ENCODE measurements at regions of chr3 and their contacts with region 1.

Region 1: GRCh38 chr3:186783073-186783730 is at the start of gene EIF4A2:
- DNase-seq: peak; percentile 88
- ATAC-seq: peak; percentile 73
- H3K4me3 Mint-ChIP-seq: peak within 1 kb of the TSS; percentile 100
- H3K27ac Mint-ChIP-seq: peak within 1 kb of the TSS; percentile 100
- H3K4me1 Mint-ChIP-seq: peaks cover 40% of the 10 kb centered on the region
- H3K27me3 Mint-ChIP-seq: peaks cover 9% of the 10 kb centered on the region; the same call in 1 of the 2 replicates
- CTCF ChIP-seq: no peak
- total RNA-seq, gene EIF4A2: 571 to 574 TPM (median 572 TPM) in 3 replicates

Region 2: DNA sequence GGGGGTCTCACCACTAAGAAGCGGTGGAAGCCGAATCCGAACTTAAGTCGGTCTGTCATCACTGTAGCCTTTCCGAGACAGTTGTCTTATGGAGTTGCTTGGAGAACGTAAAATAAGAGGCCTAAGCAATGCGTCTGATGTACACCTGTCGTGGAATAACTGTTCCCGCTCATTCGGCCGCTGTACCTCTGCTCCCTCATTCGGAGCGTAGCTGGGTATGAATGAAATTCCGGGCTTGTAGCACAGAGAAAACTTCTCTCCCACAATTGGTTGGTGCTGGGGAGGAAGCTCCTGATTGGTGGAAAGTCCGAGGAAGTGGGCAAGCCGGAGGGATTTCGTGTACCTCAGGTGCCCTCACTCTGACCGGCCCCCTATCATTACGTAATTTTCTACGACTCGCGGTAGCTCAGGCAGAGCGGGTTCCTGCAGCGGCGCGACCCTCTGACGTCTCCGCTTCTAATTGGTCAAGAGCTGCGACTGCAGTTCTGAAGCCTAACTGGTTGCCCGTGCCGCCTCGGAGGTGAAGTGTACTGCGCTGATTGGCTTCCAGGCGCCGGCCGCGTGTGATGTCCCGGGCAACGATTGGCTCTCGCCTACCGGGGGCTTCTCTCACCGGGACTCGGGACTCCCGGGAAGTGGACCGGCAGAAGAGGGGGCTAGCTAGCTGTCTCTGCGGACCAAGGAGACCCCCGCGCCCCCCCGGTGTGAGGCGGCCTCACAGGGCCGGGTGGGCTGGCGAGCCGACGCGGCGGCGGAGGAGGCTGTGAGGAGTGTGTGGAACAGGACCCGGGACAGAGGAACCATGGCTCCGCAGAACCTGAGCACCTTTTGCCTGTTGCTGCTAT is 212.9 kb before region 1 on chr3 and contains the start of gene DNAJB11:
- CTCF ChIA-PET with region 1: no interaction called
- POLR2A ChIA-PET with region 1: interaction called, 22 read pairs
- DNase-seq: peak; percentile 99
- ATAC-seq: peak; percentile 89
- H3K4me3 Mint-ChIP-seq: peak within 1 kb of the TSS; percentile 88
- H3K27ac Mint-ChIP-seq: peak within 1 kb of the TSS; percentile 98
- H3K4me1 Mint-ChIP-seq: peaks cover 31% of the 10 kb centered on the region
- H3K27me3 Mint-ChIP-seq: no peaks in the 10 kb centered on the region
- CTCF ChIP-seq: no peak
- total RNA-seq, gene DNAJB11: 44.2 to 56.3 TPM (median 47.8 TPM) in 3 replicates

Region 3: GRCh38 chr3:186625600-186626042 is 157.6 kb before region 1 on chr3:
- CTCF ChIA-PET with region 1: no interaction called
- POLR2A ChIA-PET with region 1: no interaction called
- DNase-seq: no peak
- ATAC-seq: no peak
- H3K4me3 Mint-ChIP-seq: no peak overlapping the region
- H3K27ac Mint-ChIP-seq: no peak overlapping the region
- H3K4me1 Mint-ChIP-seq: peaks cover 3% of the 10 kb centered on the region; the same call in 1 of the 2 replicates
- H3K27me3 Mint-ChIP-seq: peaks cover 2% of the 10 kb centered on the region; the same call in 1 of the 2 replicates
- CTCF ChIP-seq: no peak

Region 4: GRCh38 chr3:186708983-186709679 is 74.1 kb before region 1 on chr3:
- CTCF ChIA-PET with region 1: no interaction called
- POLR2A ChIA-PET with region 1: no interaction called
- DNase-seq: no peak
- ATAC-seq: no peak
- H3K4me3 Mint-ChIP-seq: no peak overlapping the region
- H3K27ac Mint-ChIP-seq: no peak overlapping the region
- H3K4me1 Mint-ChIP-seq: peaks cover 14% of the 10 kb centered on the region
- H3K27me3 Mint-ChIP-seq: 0 out of 2 replicates have a peak, but pooled peaks cover 2% of the 10 kb centered on the region
- CTCF ChIP-seq: no peak

Region 5: GRCh38 chr3:186722456-186722855 is 60.7 kb before region 1 on chr3:
- CTCF ChIA-PET with region 1: no interaction called
- POLR2A ChIA-PET with region 1: no interaction called
- DNase-seq: peak; percentile 32
- ATAC-seq: peak; percentile 96
- H3K4me3 Mint-ChIP-seq: no peak overlapping the region
- H3K27ac Mint-ChIP-seq: no peak overlapping the region
- H3K4me1 Mint-ChIP-seq: peaks cover 11% of the 10 kb centered on the region
- H3K27me3 Mint-ChIP-seq: no peaks in the 10 kb centered on the region
- CTCF ChIP-seq: no peak

Region 6: DNA sequence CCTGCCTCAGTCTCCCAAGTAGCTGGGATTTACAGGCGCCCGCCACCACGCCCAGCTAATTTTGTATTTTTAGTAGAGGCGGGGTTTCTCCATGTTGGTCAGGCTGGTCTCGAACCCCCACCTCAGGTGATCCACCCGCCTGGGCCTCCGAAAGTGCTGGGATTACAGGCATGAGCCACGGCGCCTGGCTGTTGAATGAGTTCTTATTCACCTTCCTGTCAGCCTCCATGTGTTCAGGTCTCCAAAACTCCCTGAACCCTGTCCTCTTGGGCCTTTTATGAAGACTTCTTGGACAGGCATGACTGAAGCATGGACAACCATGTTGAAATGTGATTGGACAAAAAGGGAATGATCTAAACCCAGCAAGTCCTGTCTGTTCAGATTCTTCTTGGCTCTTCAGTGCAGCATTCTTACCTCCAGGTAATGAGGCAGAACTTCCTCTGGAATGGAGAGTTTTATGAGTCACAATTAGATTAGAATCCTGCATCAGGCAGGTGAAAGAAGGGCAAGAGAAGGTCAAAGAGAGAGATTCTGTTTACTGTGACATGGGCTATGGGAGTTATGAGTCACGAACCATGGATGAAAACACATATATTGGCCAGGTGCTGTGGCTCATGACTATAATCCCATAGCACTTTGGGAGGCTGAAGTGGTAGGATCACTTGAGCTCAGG is 22.9 kb before region 1 on chr3:
- CTCF ChIA-PET with region 1: no interaction called
- POLR2A ChIA-PET with region 1: no interaction called
- DNase-seq: no peak
- ATAC-seq: no peak
- H3K4me3 Mint-ChIP-seq: no peak overlapping the region
- H3K27ac Mint-ChIP-seq: no peak overlapping the region
- H3K4me1 Mint-ChIP-seq: peaks cover 12% of the 10 kb centered on the region
- H3K27me3 Mint-ChIP-seq: no peaks in the 10 kb centered on the region; the same call in 1 of the 2 replicates
- CTCF ChIP-seq: no peak

Region 7: GRCh38 chr3:186772701-186773424 is 10.3 kb before region 1 on chr3:
- CTCF ChIA-PET with region 1: interaction called, 3 read pairs
- POLR2A ChIA-PET with region 1: interaction called, 16 read pairs
- DNase-seq: peak; percentile 40
- ATAC-seq: peak; percentile 44
- H3K4me3 Mint-ChIP-seq: peak overlapping the region; percentile 57
- H3K27ac Mint-ChIP-seq: no peak overlapping the region
- H3K4me1 Mint-ChIP-seq: peaks cover 26% of the 10 kb centered on the region
- H3K27me3 Mint-ChIP-seq: peaks cover 32% of the 10 kb centered on the region
- CTCF ChIP-seq: no peak